ENCODE measurements at regions of chr1 and their contacts with region 1.

Region 1: DNA sequence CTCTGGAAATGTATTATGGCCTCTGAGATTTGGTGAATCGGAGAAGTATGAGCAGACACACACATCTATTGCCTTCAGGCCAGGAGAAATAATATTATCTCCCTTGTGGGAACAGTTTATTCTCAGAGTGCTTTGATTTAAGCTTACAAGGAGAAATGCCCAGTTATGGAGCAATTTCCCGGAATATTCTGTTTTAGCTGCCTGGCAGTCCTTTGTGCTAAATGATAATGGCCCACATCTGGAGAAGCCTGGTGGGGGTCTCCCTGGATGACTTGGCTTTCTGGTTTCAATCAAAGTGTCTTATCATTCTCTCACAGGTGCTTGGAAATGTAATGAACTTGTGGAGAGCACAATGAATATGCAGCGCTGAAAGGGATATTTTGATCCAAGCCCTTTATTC is 389.6 kb upstream of the USP24 start:
- DNase-seq: peak; percentile 44
- H3K4me3 ChIP-seq: no peak overlapping the region
- H3K27ac ChIP-seq: peak overlapping the region in 1 of 2 experiments; percentile 98; a peak in 2 of 4 replicates
- H3K4me1 ChIP-seq: peaks cover 0 to 26% of the 10 kb centered on the region in 2 experiments; a peak in 2 of 4 replicates
- H3K27me3 ChIP-seq: no peaks in the 10 kb centered on the region
- CTCF ChIP-seq: no peak
- EP300 ChIP-seq: peak in 1 of 2 experiments; percentile 97; a peak in 2 of 4 replicates
- RAD21 ChIP-seq: no peak; the same call in 1 of the 2 replicates

Region 2: DNA sequence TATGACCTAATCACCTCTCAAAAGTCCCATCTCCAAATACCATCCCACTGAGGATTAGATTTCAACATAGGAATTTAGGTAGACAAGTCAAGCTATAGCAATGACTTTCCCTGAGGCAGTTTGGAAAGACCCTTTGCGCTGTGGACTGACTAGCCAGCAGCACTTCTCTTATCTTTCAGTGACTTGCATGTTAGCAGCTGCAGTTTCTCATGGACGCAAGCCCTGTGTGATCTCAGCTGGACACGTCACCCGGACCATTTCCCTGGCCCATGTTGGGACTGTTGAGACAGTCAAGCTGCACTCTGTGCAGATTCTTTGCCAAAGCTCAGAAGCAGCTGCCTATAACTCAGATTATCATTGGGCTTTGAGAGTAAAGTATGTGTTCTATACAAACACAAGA is 18.6 kb after region 1 on chr1:
- CTCF ChIA-PET with region 1: no interaction called
- POLR2A ChIA-PET with region 1: no interaction called
- DNase-seq: no peak
- H3K4me3 ChIP-seq: no peak overlapping the region
- H3K27ac ChIP-seq: no peak overlapping the region
- H3K4me1 ChIP-seq: no peaks in the 10 kb centered on the region
- H3K27me3 ChIP-seq: no peaks in the 10 kb centered on the region
- CTCF ChIP-seq: no peak
- EP300 ChIP-seq: no peak
- RAD21 ChIP-seq: no peak

Region 3: DNA sequence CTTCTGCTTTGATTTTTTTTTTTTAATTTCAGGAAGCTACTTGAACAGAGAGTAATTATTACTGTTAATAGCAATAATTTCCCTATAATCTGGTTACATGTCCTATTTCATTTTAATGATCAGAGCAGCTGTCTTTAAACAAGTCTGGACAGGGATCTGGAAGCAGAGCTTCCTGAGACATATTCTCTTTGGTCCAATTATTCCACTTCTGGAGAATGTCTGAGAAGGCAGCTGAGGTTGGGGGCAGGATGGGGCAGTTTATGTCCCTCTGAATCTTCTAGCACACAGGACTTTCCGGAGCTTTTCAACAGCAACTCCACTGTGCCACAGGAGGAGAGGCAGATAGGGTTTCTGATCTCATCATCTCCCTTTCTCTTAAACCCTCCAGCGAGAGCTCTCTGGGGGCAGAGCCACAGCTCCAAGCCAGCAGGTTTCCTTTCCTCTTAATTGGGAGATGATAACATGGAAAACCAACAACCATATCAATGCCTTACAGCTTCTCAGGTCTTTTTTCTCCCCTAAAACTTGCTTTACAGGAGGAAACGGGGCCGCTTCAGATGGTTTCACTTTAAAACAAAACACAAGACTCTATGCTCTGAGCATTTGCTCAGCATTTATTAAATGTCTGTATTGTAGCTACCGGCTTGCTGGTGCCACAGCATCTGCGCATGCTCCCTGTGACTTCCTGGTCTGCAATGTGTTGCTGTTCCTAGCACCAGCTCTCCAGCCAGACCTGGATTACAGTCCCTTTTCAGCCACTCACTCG is 36.1 kb after region 1 on chr1:
- CTCF ChIA-PET with region 1: interaction called, 8 read pairs
- POLR2A ChIA-PET with region 1: interaction called, 13 read pairs
- DNase-seq: peak; percentile 57
- H3K4me3 ChIP-seq: peak overlapping the region in 1 of 2 experiments; percentile 3; a peak in 1 of 4 replicates
- H3K27ac ChIP-seq: peak overlapping the region; percentile 17 to 100; a peak in 3 of 4 replicates
- H3K4me1 ChIP-seq: peaks cover 0 to 54% of the 10 kb centered on the region in 2 experiments; a peak in 2 of 4 replicates
- H3K27me3 ChIP-seq: no peaks in the 10 kb centered on the region
- CTCF ChIP-seq: no peak
- EP300 ChIP-seq: peak in 1 of 2 experiments; percentile 99; a peak in 2 of 4 replicates
- RAD21 ChIP-seq: peak; percentile 29; the same call in 1 of the 2 replicates